Mammary epithelial cell (primary cell): ENCODE measurements at regions of chr12 and their contacts with region 1.

Region 1: GRCh38 chr12:101642115-101643067 is 47.6 kb downstream of the MYBPC1 start:
- DNase-seq: no peak
- H3K4me3 ChIP-seq: no peak overlapping the region
- H3K27ac ChIP-seq: no peak overlapping the region
- H3K4me1 ChIP-seq: peaks cover 6% of the 10 kb centered on the region
- H3K27me3 ChIP-seq: peaks cover 4% of the 10 kb centered on the region
- CTCF ChIP-seq: no peak

Region 2: GRCh38 chr12:101459642-101460346 is 182.6 kb before region 1 on chr12:
- CTCF ChIA-PET with region 1: no interaction called
- dilution Hi-C with region 1: no loop called
- in situ Hi-C with region 1: no loop called
- intact Hi-C with region 1: no loop called
- DNase-seq: peak; percentile 6
- H3K4me3 ChIP-seq: no peak overlapping the region
- H3K27ac ChIP-seq: no peak overlapping the region
- H3K4me1 ChIP-seq: no peaks in the 10 kb centered on the region
- H3K27me3 ChIP-seq: no peaks in the 10 kb centered on the region
- CTCF ChIP-seq: no peak

Region 3: GRCh38 chr12:101564912-101565311 is 77.5 kb before region 1 on chr12:
- CTCF ChIA-PET with region 1: no interaction called
- dilution Hi-C with region 1: loop called (anchors 5 kb)
- in situ Hi-C with region 1: no loop called
- intact Hi-C with region 1: no loop called
- DNase-seq: no peak
- H3K4me3 ChIP-seq: no peak overlapping the region
- H3K27ac ChIP-seq: no peak overlapping the region
- H3K4me1 ChIP-seq: no peaks in the 10 kb centered on the region
- H3K27me3 ChIP-seq: no peaks in the 10 kb centered on the region
- CTCF ChIP-seq: no peak